ENCODE measurements at regions of chr2 and their contacts with region 1.

Region 1: DNA sequence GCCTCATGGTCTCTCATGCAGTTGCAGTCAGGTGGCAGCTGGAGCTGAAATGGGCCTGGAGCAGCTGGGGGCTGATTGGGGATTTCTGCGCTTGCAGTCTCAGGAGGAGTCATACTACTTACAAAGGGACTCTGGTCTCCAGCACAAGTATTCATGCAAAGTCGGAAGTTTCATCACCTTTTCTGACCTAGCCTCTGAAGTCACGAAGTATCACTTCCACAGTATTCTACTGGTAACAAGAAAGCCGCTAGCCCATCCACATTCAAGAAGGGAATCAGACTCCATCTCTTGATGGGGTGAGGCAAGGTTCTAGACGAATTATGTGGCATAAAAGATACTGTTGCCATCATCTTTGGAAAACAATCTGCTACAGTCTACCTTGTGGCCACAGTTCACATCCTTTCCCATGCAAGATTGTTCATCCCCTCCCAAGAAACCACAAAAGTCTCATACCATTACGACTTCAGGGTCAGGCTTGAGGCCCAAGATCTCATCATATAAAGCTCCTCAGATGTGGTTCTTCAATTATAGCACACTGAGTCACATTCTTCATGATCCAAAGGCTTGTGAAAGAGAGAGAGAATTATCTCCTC is 95.3 kb downstream of the SMC6 start:
- DNase-seq: no peak
- H3K4me3 ChIP-seq: no peak overlapping the region
- H3K27ac ChIP-seq: no peak overlapping the region
- H3K4me1 ChIP-seq: no peaks in the 10 kb centered on the region
- H3K27me3 ChIP-seq: no peaks in the 10 kb centered on the region
- CTCF ChIP-seq: no peak
- EP300 ChIP-seq: no peak
- POLR2A ChIP-seq: no peak

Region 2: DNA sequence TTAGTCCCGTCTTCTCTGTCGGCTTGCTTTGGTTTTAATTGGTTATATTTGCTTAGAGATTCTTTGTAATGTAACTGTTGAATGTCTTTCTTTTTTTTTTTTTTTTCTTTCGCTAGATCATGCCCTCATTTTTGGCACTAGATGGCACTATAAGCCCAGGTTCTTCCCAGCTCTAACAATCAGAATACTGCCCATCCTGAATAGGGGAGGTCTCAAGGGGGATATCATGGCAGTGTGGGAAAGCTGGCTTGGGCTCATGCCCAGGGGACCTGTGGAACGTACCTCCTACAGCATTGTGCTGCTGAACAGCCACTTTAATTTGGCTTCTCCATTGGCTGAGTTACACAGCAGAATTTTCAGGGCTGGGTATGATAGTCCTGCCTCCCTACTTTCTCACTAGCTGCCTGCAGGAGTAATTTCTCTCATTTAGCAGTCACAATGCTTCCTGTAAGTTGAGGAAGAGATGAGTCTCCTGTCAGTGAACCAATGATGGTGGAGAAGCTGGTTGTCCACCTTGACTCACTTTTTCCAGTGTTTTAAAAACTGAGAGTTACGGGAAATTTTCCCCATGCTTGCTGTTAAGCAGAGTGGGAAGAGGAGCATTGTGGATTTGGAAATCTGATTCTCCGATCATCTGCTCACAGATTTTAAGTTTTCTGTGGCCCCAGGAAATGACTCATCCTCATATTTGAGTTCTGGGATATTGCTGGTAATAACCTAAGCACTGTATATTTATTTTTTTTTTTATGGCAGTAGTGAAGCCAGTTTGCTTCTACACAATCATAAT is 187.3 kb before region 1 on chr2:
- in situ Hi-C with region 1: loop called in 1 of 4 experiments (anchors 25 kb)
- intact Hi-C with region 1: no loop called
- DNase-seq: no peak
- H3K4me3 ChIP-seq: no peak overlapping the region
- H3K27ac ChIP-seq: no peak overlapping the region
- H3K4me1 ChIP-seq: no peaks in the 10 kb centered on the region
- H3K27me3 ChIP-seq: no peaks in the 10 kb centered on the region
- CTCF ChIP-seq: peak; percentile 15 to 41 (median 37)
- EP300 ChIP-seq: no peak
- POLR2A ChIP-seq: no peak

Region 3: GRCh38 chr2:18262601-18263000 is 604.3 kb after region 1 on chr2:
- in situ Hi-C with region 1: no loop called
- intact Hi-C with region 1: loop called (anchors 5 kb)
- DNase-seq: no peak
- H3K4me3 ChIP-seq: no peak overlapping the region
- H3K27ac ChIP-seq: no peak overlapping the region
- H3K4me1 ChIP-seq: no peaks in the 10 kb centered on the region
- H3K27me3 ChIP-seq: no peaks in the 10 kb centered on the region
- CTCF ChIP-seq: no peak
- EP300 ChIP-seq: no peak
- POLR2A ChIP-seq: no peak